Activated CD4-positive, alpha-beta T cell treated with anti-CD3 and anti-CD28 coated beads for 36 hours (primary cell): ENCODE measurements at regions of chr12 and their contacts with region 1.

Region 1: GRCh38 chr12:104986022-104986941 is at the start of gene NOPCHAP1:
- DNase-seq: peak; percentile 91
- ATAC-seq: peak; percentile 98
- H3K4me3 Mint-ChIP-seq: peak within 1 kb of the TSS; percentile 78
- H3K27ac Mint-ChIP-seq: peak within 1 kb of the TSS; percentile 40
- H3K4me1 Mint-ChIP-seq: peaks cover 48% of the 10 kb centered on the region
- H3K27me3 Mint-ChIP-seq: peaks cover 11% of the 10 kb centered on the region
- total RNA-seq, gene NOPCHAP1: 31.1 to 35.2 TPM

Region 2: GRCh38 chr12:105030820-105031807 is 44.8 kb after region 1 on chr12:
- CTCF ChIA-PET with region 1: no interaction called
- POLR2A ChIA-PET with region 1: no interaction called
- intact Hi-C with region 1: loop called in 1 of 2 experiments (anchors 5 kb)
- DNase-seq: no peak
- ATAC-seq: peak; percentile 60
- H3K4me3 Mint-ChIP-seq: no peak overlapping the region
- H3K27ac Mint-ChIP-seq: peak overlapping the region; percentile 40
- H3K4me1 Mint-ChIP-seq: peaks cover 32% of the 10 kb centered on the region
- H3K27me3 Mint-ChIP-seq: no peaks in the 10 kb centered on the region